ENCODE measurements at regions of chr10 and their contacts with region 1.

Region 1: DNA sequence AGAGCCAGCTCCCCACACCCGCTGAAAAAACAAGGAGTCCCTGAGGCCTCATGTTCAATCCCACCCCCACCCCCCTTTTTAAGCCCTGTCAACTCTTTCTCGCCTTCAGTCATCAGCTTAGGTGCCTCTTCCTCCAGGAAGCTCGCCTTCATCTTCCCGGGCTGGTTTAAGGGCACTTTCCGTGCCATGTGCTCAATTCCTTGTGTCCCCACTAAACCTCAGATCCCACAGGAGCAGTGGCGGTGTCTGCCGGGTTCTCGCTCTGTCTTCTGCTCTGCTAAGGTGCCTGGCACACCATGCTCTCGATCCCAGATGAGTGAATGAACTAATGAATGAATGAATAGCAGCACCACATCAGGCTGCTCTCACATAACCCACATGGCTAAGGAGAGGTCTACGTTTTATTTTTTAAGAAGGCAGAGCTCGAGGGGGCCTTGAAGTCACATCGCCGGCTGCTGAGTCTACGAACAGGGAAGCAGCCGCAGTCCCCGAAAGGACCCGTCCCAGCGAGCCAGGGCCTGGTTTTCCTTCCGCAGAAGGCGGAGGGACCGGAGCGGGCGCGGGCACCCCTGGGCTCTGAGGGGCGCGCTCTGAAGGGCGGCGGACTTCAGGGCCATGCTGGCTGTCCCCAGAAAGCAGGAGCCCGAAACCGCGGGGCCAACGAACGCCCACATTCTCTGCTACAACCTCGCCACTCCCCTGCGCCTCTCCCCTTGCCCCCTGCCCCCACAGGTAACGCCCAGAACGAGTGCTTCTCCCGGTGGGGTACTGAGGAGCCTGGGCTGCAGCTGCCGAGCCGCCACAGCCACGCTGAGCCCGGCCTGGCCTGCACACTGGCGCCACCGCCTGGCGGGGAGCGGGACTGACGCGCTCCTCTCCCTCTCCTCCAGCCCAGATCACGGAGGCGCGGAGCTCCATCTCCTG is 73.4 kb upstream of the KCNMA1 start:
- DNase-seq: peak; percentile 74
- ATAC-seq: peak; percentile 94
- H3K4me3 Mint-ChIP-seq: peak overlapping the region; percentile 39
- H3K27ac Mint-ChIP-seq: no peak overlapping the region
- H3K4me1 Mint-ChIP-seq: peaks cover 19% of the 10 kb centered on the region
- H3K27me3 Mint-ChIP-seq: peaks cover 43% of the 10 kb centered on the region

Region 2: GRCh38 chr10:77721815-77722214 is 10.8 kb after region 1 on chr10:
- CTCF ChIA-PET with region 1: interaction called, 17 read pairs
- DNase-seq: no peak
- ATAC-seq: no peak
- H3K4me3 Mint-ChIP-seq: no peak overlapping the region
- H3K27ac Mint-ChIP-seq: no peak overlapping the region
- H3K4me1 Mint-ChIP-seq: peaks cover 2% of the 10 kb centered on the region
- H3K27me3 Mint-ChIP-seq: peaks cover 18% of the 10 kb centered on the region

Region 3: GRCh38 chr10:77756319-77757232 is 45.6 kb after region 1 on chr10:
- CTCF ChIA-PET with region 1: interaction called, 10 read pairs
- DNase-seq: peak; percentile 44
- ATAC-seq: no peak
- H3K4me3 Mint-ChIP-seq: no peak overlapping the region
- H3K27ac Mint-ChIP-seq: no peak overlapping the region
- H3K4me1 Mint-ChIP-seq: no peaks in the 10 kb centered on the region
- H3K27me3 Mint-ChIP-seq: peaks cover 27% of the 10 kb centered on the region

Region 4: GRCh38 chr10:77837240-77837924 is 126.4 kb after region 1 on chr10:
- CTCF ChIA-PET with region 1: interaction called, 33 read pairs
- DNase-seq: peak; percentile 89
- ATAC-seq: peak; percentile 87
- H3K4me3 Mint-ChIP-seq: no peak overlapping the region
- H3K27ac Mint-ChIP-seq: no peak overlapping the region
- H3K4me1 Mint-ChIP-seq: peaks cover 15% of the 10 kb centered on the region
- H3K27me3 Mint-ChIP-seq: no peaks in the 10 kb centered on the region

Measured in activated CD8-positive, alpha-beta memory T cell treated with anti-CD3 and anti-CD28 coated beads, Interleukin-2, amount 10 ng/mL, durations not matched to agents 7 days and 5 days (primary cell).